ENCODE measurements at regions of chr2 and their contacts with region 1.

Region 1: DNA sequence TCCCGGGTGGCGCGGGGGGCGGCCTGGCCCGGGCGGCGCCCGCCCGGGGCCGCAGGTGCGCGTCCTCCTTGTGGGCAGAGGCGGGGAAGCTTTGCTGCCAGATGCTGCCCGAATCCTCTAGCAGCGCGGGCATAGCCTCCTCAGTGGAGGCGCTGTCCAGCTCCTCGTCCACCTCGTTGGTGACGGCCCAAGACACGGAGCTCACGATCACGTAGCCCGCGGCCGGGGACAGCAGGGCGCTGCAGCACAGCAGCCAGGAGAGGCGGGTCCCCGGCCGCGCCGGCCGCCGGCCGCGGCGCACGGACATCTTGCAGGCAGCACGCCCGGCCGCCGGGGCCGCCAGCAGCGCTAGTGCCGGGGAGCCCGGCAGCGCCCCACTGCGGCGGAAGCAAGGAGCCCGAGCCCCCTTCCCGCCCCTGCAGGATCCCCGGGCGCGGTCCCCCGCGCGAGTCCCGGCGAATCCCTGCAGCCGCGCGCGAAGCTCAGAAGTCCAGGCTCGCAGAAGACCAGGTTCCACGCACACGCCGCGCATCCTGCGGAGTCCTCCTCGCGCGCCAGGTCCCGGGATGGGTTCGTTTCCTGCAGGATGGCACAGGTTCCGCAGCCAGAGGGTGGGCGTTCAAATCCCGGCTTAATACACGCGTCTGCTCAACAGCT is at the start of gene CREG2:
- DNase-seq: no peak
- H3K4me3 ChIP-seq: peak within 1 kb of the TSS; percentile 59
- CTCF ChIP-seq: peak; percentile 55

Region 2: GRCh38 chr2:101151141-101151858 is 236.0 kb before region 1 on chr2 and contains the start of gene TBC1D8:
- CTCF ChIA-PET with region 1: no interaction called
- POLR2A ChIA-PET with region 1: no interaction called
- DNase-seq: no peak
- H3K4me3 ChIP-seq: peak within 1 kb of the TSS; percentile 64
- CTCF ChIP-seq: no peak

Region 3: GRCh38 chr2:101349893-101350662 is 37.2 kb before region 1 on chr2:
- CTCF ChIA-PET with region 1: interaction called, 15 read pairs
- POLR2A ChIA-PET with region 1: no interaction called
- DNase-seq: no peak
- H3K4me3 ChIP-seq: no peak overlapping the region
- CTCF ChIP-seq: peak; percentile 42

Region 4: DNA sequence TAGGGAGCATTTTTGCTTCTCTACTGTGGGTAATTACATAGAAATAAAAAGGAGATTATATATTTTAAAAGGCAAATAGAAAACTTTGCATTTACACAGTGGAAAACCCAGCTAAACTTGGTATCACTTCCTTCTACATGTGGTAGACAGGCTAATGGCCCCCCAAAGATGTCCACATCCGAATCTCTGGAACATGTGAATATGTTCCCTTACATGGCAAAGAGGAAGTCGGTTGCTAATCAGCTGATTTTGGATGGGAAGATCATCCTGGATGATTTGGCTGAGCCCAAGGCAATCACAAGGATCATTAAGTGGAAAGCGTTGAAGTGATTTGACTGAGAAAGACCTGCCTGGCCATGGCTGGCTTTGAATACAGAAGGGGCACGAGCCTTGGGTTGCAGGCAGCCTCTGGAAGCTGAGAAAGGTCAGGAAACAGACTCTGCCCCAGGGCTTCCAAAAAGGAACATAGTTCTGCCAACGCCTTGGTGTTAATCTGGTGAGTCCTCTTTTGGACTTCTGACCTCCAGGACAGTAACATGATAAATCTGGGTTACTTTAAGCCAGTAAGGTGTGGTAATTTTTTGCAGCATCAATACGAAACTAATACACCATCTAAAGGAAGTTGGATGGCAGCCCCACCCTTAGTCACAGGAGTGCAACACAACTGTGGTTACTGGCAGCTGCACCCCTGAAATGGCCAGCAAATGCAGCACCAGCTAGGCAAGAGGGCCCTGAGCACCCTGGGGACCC is 26.0 kb before region 1 on chr2:
- CTCF ChIA-PET with region 1: interaction called, 13 read pairs
- POLR2A ChIA-PET with region 1: no interaction called
- DNase-seq: no peak
- H3K4me3 ChIP-seq: no peak overlapping the region
- CTCF ChIP-seq: no peak

Region 5: DNA sequence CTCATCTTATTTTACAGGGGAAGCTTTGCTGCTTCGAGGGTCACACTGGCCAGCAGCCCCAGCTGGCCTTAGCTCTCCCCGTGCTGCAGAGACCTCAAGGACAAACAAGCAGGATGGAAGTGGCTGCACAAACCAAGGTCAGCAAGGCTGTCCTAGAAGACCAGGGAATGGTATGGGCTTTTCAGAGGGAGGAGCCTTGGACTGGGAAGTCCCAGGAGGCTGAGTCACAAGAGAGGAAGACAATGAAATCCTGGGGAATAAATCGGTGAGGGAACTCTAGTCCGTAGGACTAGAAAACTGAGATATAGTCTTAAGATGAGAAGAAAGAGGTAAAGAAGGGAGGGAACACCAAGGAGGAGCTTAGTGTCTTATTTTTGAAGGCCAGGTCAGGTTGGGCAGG is 15.6 kb before region 1 on chr2:
- CTCF ChIA-PET with region 1: interaction called, 12 read pairs
- POLR2A ChIA-PET with region 1: no interaction called
- DNase-seq: no peak
- H3K4me3 ChIP-seq: no peak overlapping the region
- CTCF ChIP-seq: no peak